Activated CD8-positive, alpha-beta T cell treated with anti-CD3 and anti-CD28 coated beads for 36 hours (primary cell): ENCODE measurements at regions of chr6 and their contacts with region 1.

Region 1: DNA sequence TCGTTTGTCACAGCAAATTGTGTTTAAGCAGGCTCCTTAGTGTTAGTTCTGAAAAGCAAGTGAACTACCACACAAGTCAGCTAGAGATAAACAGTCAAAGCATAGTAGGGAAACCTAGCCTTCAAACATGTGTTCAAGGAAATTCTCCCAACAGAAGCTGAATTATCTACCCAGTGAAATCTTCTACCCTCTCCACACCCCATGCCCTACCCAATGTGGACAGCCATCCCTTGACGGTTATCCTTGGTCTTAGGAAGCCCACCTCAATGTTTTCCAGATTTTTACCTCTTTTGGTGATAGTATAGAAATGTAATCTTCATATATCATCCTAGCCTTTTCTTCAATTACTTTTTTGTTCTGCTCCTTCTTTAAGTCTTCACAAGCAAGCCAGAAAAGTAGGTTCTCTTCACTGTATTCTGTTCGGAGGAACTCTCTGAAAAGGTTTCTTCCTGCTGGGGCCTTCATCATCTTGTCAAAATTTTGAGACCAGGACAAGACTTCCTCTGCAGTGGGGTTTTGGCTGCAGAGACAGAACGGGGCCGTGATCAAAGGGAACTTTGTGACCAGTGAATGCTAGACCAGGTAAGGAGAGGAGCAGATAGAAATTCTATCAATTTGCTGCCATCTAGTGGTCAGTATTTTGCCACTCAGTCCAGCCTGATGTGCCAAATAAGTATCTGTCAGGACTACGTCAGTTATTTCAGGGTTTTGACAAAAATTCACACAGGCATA is 21.6 kb upstream of the MTRF1L start:
- DNase-seq: peak; percentile 59
- ATAC-seq: peak; percentile 93
- H3K4me3 Mint-ChIP-seq: no peak overlapping the region
- H3K27ac Mint-ChIP-seq: no peak overlapping the region
- H3K4me1 Mint-ChIP-seq: peaks cover 6% of the 10 kb centered on the region
- H3K27me3 Mint-ChIP-seq: peaks cover 13% of the 10 kb centered on the region
- CTCF ChIP-seq: peak; percentile 75

Region 2: GRCh38 chr6:152783217-152783878 is 240.8 kb before region 1 on chr6:
- CTCF ChIA-PET with region 1: no interaction called
- POLR2A ChIA-PET with region 1: no interaction called
- intact Hi-C with region 1: no loop called
- DNase-seq: no peak
- ATAC-seq: no peak
- H3K4me3 Mint-ChIP-seq: no peak overlapping the region
- H3K27ac Mint-ChIP-seq: no peak overlapping the region
- H3K4me1 Mint-ChIP-seq: no peaks in the 10 kb centered on the region
- H3K27me3 Mint-ChIP-seq: no peaks in the 10 kb centered on the region
- CTCF ChIP-seq: no peak

Region 3: DNA sequence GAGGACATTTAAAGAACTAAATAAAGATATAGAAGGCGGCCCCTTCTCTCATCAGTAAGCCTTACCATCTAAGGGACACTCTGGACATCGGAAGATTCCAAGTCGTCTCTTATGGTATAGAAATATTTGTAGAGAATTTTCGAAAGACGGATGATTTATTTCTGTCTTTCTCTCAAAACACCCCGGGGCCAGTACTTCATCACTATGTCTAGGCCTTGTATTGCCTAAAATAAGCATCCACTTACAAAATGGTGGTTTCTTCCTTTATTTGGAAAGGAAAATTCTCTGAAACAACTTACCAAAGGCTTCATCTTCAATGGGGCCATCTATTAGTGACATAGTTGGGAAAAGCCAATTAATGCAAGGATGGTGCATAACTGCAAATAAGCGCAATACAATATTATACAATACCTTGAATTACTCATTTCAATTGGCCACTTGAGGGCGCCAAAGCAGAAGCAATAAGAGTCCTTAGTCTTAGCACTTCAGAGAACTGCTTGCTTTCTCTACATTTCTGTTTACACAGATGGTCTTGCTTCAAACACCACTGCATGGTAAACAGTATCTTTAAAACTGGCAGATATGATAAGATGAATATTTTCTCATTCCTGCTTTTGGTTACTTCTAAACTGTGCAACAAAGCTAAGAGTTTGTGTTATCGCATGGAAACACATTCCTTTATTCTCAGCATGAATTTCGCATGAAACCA is 160.4 kb before region 1 on chr6:
- CTCF ChIA-PET with region 1: interaction called, 16 read pairs
- POLR2A ChIA-PET with region 1: no interaction called
- intact Hi-C with region 1: loop called (anchors 1 kb)
- DNase-seq: peak; percentile 81
- ATAC-seq: peak; percentile 74
- H3K4me3 Mint-ChIP-seq: no peak overlapping the region
- H3K27ac Mint-ChIP-seq: no peak overlapping the region
- H3K4me1 Mint-ChIP-seq: peaks cover 5% of the 10 kb centered on the region
- H3K27me3 Mint-ChIP-seq: peaks cover 10% of the 10 kb centered on the region
- CTCF ChIP-seq: peak; percentile 75

Region 4: DNA sequence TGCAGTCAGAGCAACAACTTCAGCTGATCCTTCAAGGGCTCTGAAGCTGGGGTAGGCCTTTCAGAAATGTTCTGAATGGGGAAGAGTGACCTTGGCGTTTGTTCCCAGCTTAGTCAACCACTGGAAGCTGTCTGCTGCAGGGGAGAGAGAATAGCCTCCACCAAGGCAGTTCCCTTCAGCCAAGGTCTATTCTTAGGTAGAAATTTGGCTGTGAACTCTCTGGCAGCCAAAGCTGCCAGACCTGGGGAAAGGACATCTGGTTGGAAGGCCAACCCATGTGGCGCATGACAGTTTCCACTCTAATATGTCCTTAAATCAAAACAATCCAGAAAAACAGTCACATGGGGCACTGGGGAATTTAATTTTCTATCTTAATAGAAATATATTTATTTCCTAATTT is 101.4 kb before region 1 on chr6:
- CTCF ChIA-PET with region 1: no interaction called
- POLR2A ChIA-PET with region 1: no interaction called
- intact Hi-C with region 1: no loop called
- DNase-seq: no peak
- ATAC-seq: no peak
- H3K4me3 Mint-ChIP-seq: no peak overlapping the region
- H3K27ac Mint-ChIP-seq: no peak overlapping the region
- H3K4me1 Mint-ChIP-seq: no peaks in the 10 kb centered on the region
- H3K27me3 Mint-ChIP-seq: peaks cover 12% of the 10 kb centered on the region
- CTCF ChIP-seq: no peak

Region 5: GRCh38 chr6:153059761-153060160 is 35.6 kb after region 1 on chr6:
- CTCF ChIA-PET with region 1: no interaction called
- POLR2A ChIA-PET with region 1: no interaction called
- intact Hi-C with region 1: no loop called
- DNase-seq: no peak
- ATAC-seq: no peak
- H3K4me3 Mint-ChIP-seq: no peak overlapping the region
- H3K27ac Mint-ChIP-seq: no peak overlapping the region
- H3K4me1 Mint-ChIP-seq: no peaks in the 10 kb centered on the region
- H3K27me3 Mint-ChIP-seq: peaks cover 20% of the 10 kb centered on the region
- CTCF ChIP-seq: no peak